ENCODE measurements at regions of chr16 and their contacts with region 1.

Region 1: GRCh38 chr16:23435500-23435899 is 17.5 kb downstream of the COG7 start:
- DNase-seq: peak; percentile 34 to 82
- H3K4me3 ChIP-seq: no peak overlapping the region
- H3K27ac ChIP-seq: no peak overlapping the region
- H3K4me1 ChIP-seq: no peaks in the 10 kb centered on the region
- H3K27me3 ChIP-seq: no peaks in the 10 kb centered on the region
- CTCF ChIP-seq: peak; percentile 77 to 98 (median 92)
- EP300 ChIP-seq: no peak
- POLR2A ChIP-seq: no peak
- RAD21 ChIP-seq: peak; percentile 73 to 76

Region 2: GRCh38 chr16:23207493-23207892 is 228.0 kb before region 1 on chr16:
- CTCF ChIA-PET with region 1: interaction called, 18 read pairs
- POLR2A ChIA-PET with region 1: no interaction called
- DNase-seq: no peak
- H3K4me3 ChIP-seq: no peak overlapping the region
- H3K27ac ChIP-seq: no peak overlapping the region
- H3K4me1 ChIP-seq: peaks cover 3 to 22% (median 10%) of the 10 kb centered on the region in 4 experiments
- H3K27me3 ChIP-seq: no peaks in the 10 kb centered on the region
- CTCF ChIP-seq: no peak
- EP300 ChIP-seq: no peak
- POLR2A ChIP-seq: no peak
- RAD21 ChIP-seq: no peak

Region 3: DNA sequence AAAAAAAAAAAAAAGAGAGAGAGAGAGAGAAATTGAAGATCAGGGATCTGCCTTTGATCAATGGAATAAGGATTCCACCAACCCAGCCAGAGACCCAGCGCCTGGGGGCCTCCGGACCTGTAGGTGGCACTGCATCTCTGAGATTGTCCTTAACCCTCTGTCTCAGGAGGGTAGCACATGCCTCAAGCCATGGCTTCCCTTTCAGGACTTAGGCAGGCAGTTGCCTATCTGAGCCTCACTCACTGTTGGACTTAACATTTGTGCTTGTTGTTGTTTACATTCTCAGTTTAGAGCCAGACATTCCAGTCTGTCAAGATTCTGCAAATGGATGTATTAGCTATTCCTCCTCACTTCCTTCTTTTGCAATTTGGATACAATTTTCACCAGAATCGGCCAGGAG is 138.5 kb before region 1 on chr16:
- CTCF ChIA-PET with region 1: interaction called, 47 read pairs
- POLR2A ChIA-PET with region 1: no interaction called
- DNase-seq: peak in 1 of 2 experiments; percentile 81
- H3K4me3 ChIP-seq: no peak overlapping the region
- H3K27ac ChIP-seq: no peak overlapping the region
- H3K4me1 ChIP-seq: peaks cover 0 to 6% (median 1%) of the 10 kb centered on the region in 4 experiments; a peak in 3 of 7 replicates
- H3K27me3 ChIP-seq: peaks cover 3 to 8% (median 6%) of the 10 kb centered on the region in 4 experiments
- CTCF ChIP-seq: peak; percentile 67 to 88 (median 78)
- EP300 ChIP-seq: no peak
- POLR2A ChIP-seq: no peak
- RAD21 ChIP-seq: peak; percentile 57 to 64

Region 4: GRCh38 chr16:23316966-23317661 is 118.4 kb before region 1 on chr16:
- CTCF ChIA-PET with region 1: interaction called, 38 read pairs
- POLR2A ChIA-PET with region 1: no interaction called
- DNase-seq: no peak
- H3K4me3 ChIP-seq: no peak overlapping the region
- H3K27ac ChIP-seq: no peak overlapping the region
- H3K4me1 ChIP-seq: no peaks in the 10 kb centered on the region
- H3K27me3 ChIP-seq: no peaks in the 10 kb centered on the region
- CTCF ChIP-seq: no peak
- EP300 ChIP-seq: no peak
- POLR2A ChIP-seq: no peak
- RAD21 ChIP-seq: no peak

Region 5: DNA sequence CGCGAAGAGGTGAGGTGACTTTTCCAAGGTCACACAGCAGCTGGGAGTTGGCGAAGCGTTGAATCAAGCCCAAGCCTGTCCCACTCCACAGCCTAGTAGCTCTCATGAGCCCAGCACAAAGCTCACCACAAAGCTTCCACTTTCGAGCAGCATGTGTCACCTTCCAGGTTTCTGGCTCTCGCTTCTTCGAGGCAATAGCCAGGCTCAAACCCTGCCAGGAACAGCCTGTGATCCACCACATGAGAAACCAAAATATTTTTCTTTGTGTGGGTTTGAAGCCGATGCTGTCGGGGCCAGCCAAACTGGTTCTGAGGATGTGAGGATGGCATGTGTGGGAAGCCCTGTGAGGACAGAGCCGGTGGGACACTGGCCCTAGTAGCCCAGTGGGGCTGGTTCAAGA is 50.6 kb before region 1 on chr16:
- CTCF ChIA-PET with region 1: interaction called, 44 read pairs
- POLR2A ChIA-PET with region 1: no interaction called
- DNase-seq: no peak
- H3K4me3 ChIP-seq: no peak overlapping the region
- H3K27ac ChIP-seq: no peak overlapping the region
- H3K4me1 ChIP-seq: peaks cover 0 to 3% (median under 1%) of the 10 kb centered on the region in 4 experiments; a peak in 1 of 7 replicates
- H3K27me3 ChIP-seq: no peaks in the 10 kb centered on the region
- CTCF ChIP-seq: no peak
- EP300 ChIP-seq: no peak
- POLR2A ChIP-seq: no peak
- RAD21 ChIP-seq: no peak

Region 6: GRCh38 chr16:23408823-23409298 is 26.6 kb before region 1 on chr16:
- CTCF ChIA-PET with region 1: interaction called, 53 read pairs
- POLR2A ChIA-PET with region 1: interaction called, 3 read pairs
- DNase-seq: no peak
- H3K4me3 ChIP-seq: no peak overlapping the region
- H3K27ac ChIP-seq: no peak overlapping the region
- H3K4me1 ChIP-seq: peaks cover 4 to 14% (median 9%) of the 10 kb centered on the region in 4 experiments
- H3K27me3 ChIP-seq: no peaks in the 10 kb centered on the region
- CTCF ChIP-seq: no peak
- EP300 ChIP-seq: no peak
- POLR2A ChIP-seq: no peak
- RAD21 ChIP-seq: no peak

Region 7: GRCh38 chr16:23452572-23453337 is 17.3 kb after region 1 on chr16 and contains the start of gene COG7:
- CTCF ChIA-PET with region 1: interaction called, 38 read pairs
- POLR2A ChIA-PET with region 1: interaction called, 6 read pairs
- DNase-seq: peak; percentile 44 to 94
- H3K4me3 ChIP-seq: peak within 1 kb of the TSS; percentile 76 to 98 (median 82)
- H3K27ac ChIP-seq: peak within 1 kb of the TSS; percentile 61; the same call in 1 of the 2 replicates
- H3K4me1 ChIP-seq: peaks cover 0 to 3% (median 1%) of the 10 kb centered on the region in 4 experiments; a peak in 3 of 7 replicates
- H3K27me3 ChIP-seq: no peaks in the 10 kb centered on the region
- CTCF ChIP-seq: no peak
- EP300 ChIP-seq: no peak
- POLR2A ChIP-seq: peak in 1 of 2 experiments; percentile 69; a peak in 2 of 3 replicates
- RAD21 ChIP-seq: no peak
- total RNA-seq, gene COG7: 17.2 TPM in 2 replicates

Region 8: DNA sequence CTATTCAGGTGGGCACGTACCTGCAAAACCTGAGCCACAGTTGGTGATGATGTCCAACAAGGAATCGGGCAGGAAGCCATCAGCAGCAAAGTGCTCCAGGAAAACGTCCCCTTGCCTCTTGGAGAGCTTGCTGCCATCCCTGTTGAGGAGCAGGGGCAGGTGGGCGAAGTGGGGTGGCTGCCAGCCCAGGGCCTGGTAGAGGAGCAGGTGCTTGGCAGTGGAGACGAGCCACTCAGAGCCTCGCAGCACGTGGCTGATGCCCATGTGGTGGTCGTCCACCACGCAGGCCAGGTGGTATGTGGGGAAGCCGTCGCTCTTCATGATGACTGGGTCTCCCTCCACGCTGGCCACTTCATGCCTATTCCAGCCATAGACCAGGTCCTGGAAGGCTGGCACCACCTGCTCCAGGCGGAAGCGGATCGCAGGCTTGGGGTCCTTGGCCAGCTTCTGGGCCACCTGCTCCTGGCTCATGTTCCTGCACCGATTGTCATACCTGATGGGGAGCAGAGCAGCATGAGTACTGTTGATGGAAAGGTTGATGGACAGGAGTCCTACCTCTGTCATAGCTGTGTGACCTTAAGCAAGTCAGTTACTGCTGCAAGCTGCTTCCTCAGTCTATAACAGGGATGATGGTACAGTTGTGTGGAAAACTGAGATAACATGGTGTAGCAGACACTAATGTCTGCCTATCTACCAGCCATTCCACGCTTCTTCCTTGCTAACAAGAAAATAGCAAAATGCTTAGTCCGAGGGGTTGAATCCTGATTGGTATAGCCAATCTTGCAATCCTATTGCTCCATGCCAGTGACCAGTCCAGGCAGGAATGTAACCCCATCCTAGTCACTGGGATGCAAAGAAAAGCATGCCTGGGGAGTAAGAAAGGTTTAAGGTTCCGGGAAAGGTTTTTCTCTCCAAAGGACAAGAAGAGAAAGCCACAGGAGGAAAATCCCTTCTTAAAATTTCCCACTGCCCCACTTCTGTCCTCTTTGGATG is 99.7 kb after region 1 on chr16:
- CTCF ChIA-PET with region 1: no interaction called
- POLR2A ChIA-PET with region 1: no interaction called
- DNase-seq: no peak
- H3K4me3 ChIP-seq: no peak overlapping the region
- H3K27ac ChIP-seq: no peak overlapping the region
- H3K4me1 ChIP-seq: no peaks in the 10 kb centered on the region
- H3K27me3 ChIP-seq: no peaks in the 10 kb centered on the region
- CTCF ChIP-seq: no peak
- EP300 ChIP-seq: no peak
- POLR2A ChIP-seq: no peak
- RAD21 ChIP-seq: no peak

Measured in H1 (cell line).